AG04449 (cell line): ENCODE measurements at regions of chr1 and their contacts with region 1.

Region 1: DNA sequence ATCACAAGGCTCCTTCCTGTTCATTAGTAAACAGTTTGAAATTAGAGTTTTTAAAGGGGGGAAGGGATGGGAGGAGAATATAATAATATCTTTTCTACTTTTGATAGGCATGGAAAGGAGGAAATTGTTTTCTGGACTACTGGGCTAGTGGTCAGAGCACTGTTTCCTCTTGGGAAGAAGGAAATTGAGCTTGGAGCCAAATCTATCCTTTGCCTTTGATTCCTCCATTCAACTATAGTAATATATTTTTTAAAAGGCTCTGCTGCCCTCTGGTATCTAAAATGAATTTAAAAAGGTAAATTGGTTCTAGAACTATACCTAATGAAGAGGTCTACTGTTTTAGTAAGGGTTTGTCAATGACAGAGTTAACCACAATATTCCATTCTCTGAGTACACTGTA is 5.9 kb downstream of the IARS2 start:
- DNase-seq: no peak
- H3K4me3 ChIP-seq: no peak overlapping the region
- CTCF ChIP-seq: no peak

Region 2: GRCh38 chr1:220113136-220113695 is 13.4 kb after region 1 on chr1:
- CTCF ChIA-PET with region 1: interaction called, 14 read pairs
- POLR2A ChIA-PET with region 1: no interaction called
- DNase-seq: no peak
- H3K4me3 ChIP-seq: no peak overlapping the region
- CTCF ChIP-seq: peak; percentile 13

Region 3: DNA sequence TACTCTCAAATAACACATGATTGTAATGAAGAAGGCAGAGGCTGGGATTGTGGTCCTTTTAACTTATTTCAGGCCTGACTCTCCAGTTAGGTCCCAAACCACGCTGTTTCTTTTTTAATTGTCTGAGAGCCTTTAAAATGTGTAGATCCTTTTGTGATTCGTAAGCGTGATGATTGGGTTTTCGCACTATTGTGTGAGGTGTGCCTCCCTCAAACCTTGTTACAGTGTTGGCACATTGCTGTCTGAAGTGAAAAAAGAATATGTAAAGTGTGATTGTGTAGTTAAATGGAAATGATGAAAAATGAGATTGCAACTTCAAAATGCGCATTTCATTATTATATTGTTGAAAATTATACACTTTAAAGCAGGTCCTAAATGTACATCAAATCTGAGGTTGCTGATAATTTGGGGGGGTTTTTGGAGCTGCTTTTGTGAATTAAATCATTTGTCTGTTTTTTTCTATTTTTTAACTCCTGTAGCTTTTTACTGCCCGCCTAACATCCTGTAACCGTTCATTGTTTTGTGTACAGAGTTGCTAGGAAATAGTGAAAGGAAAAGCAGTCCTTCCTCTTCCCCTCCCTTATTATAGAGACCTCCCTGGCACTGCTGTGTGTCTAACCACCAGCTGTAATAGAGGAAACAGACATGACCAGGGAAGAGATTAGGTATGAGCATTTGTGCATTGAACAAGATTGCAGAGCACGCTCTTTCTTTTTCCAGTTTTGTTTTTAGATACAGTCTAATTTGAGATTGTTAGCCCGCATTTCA is 37.4 kb after region 1 on chr1:
- CTCF ChIA-PET with region 1: no interaction called
- POLR2A ChIA-PET with region 1: no interaction called
- DNase-seq: no peak
- H3K4me3 ChIP-seq: no peak overlapping the region
- CTCF ChIP-seq: no peak